B cell (primary cell): ENCODE measurements at regions of chr6 and their contacts with region 1.

Region 1: DNA sequence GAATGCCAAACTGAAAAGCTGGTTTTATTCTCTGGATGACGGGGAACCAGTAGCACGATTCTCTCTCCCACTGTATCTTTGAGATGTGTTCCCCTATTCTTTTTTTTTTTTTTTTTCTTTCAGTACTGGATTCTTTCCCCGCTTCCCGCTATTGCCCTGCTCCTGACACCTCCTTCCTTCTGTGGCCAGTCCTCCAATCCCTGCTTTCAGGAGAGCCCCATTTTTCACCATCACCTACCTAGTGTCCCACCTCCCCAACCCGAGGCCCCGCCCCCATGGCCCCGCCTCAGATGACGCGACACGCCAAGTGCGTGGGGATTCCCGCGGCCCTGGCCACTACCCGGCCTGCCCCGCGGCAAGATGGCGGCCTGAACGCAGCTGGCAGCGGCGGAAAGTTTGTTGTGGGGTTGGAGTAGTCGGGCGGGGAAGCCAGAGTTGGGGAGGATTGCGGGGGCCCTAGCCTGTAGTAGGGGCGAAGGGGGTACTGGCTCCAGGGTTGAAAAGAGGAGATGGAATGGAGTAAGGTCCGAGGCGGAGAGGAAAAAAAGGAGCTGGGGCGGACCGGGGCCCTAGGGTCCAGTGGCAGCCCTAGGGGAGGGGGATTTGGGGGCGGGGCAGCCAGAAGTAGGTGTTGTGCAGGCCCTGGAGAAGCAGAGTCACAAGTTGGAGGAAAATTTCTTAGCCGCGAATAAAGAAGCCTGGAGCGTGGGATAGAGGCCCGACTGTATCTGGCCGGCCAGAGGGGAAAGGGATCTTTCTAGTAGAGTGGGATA is at the start of gene TJAP1:
- DNase-seq: peak; percentile 94
- ATAC-seq: peak; percentile 100
- H3K4me3 ChIP-seq: peak within 1 kb of the TSS; percentile 51 to 81 (median 71)
- H3K4me3 Mint-ChIP-seq: peak within 1 kb of the TSS; percentile 96
- H3K27ac ChIP-seq: peak within 1 kb of the TSS; percentile 79 to 97
- H3K27ac Mint-ChIP-seq: peak within 1 kb of the TSS; percentile 98
- H3K4me1 ChIP-seq: peaks cover 14 to 22% of the 10 kb centered on the region in 2 donors
- H3K4me1 Mint-ChIP-seq: peaks cover 41% of the 10 kb centered on the region
- H3K27me3 ChIP-seq: no peaks in the 10 kb centered on the region
- H3K27me3 Mint-ChIP-seq: no peaks in the 10 kb centered on the region
- CTCF ChIP-seq: no peak
- total RNA-seq, gene TJAP1: 57.1 and 59.1 TPM in 2 replicates

Region 2: GRCh38 chr6:42710316-42710715 is 767.1 kb before region 1 on chr6:
- CTCF ChIA-PET with region 1: no interaction called
- POLR2A ChIA-PET with region 1: no interaction called
- intact Hi-C with region 1: no loop called
- DNase-seq: no peak
- ATAC-seq: no peak
- H3K4me3 ChIP-seq: no peak overlapping the region
- H3K4me3 Mint-ChIP-seq: no peak overlapping the region
- H3K27ac ChIP-seq: no peak overlapping the region
- H3K27ac Mint-ChIP-seq: no peak overlapping the region
- H3K4me1 ChIP-seq: no peaks in the 10 kb centered on the region
- H3K4me1 Mint-ChIP-seq: no peaks in the 10 kb centered on the region
- H3K27me3 ChIP-seq: peaks cover 0 to 3% (median 1%) of the 10 kb centered on the region in 4 experiments
- H3K27me3 Mint-ChIP-seq: peaks cover 11% of the 10 kb centered on the region
- CTCF ChIP-seq: no peak

Region 3: GRCh38 chr6:43181942-43182860 is 295.2 kb before region 1 on chr6 and contains the start of gene CUL9:
- CTCF ChIA-PET with region 1: no interaction called
- POLR2A ChIA-PET with region 1: no interaction called
- intact Hi-C with region 1: loop called (anchors 1 kb)
- DNase-seq: peak; percentile 90
- ATAC-seq: peak; percentile 99
- H3K4me3 ChIP-seq: peak within 1 kb of the TSS; percentile 60 to 90 (median 74)
- H3K4me3 Mint-ChIP-seq: peak within 1 kb of the TSS; percentile 92
- H3K27ac ChIP-seq: peak within 1 kb of the TSS; percentile 64 to 87
- H3K27ac Mint-ChIP-seq: peak within 1 kb of the TSS; percentile 91
- H3K4me1 ChIP-seq: peaks cover 20% of the 10 kb centered on the region in 2 donors
- H3K4me1 Mint-ChIP-seq: peaks cover 38% of the 10 kb centered on the region
- H3K27me3 ChIP-seq: no peaks in the 10 kb centered on the region
- H3K27me3 Mint-ChIP-seq: no peaks in the 10 kb centered on the region
- CTCF ChIP-seq: no peak
- total RNA-seq, gene CUL9: 110 and 115 TPM in 2 replicates

Region 4: DNA sequence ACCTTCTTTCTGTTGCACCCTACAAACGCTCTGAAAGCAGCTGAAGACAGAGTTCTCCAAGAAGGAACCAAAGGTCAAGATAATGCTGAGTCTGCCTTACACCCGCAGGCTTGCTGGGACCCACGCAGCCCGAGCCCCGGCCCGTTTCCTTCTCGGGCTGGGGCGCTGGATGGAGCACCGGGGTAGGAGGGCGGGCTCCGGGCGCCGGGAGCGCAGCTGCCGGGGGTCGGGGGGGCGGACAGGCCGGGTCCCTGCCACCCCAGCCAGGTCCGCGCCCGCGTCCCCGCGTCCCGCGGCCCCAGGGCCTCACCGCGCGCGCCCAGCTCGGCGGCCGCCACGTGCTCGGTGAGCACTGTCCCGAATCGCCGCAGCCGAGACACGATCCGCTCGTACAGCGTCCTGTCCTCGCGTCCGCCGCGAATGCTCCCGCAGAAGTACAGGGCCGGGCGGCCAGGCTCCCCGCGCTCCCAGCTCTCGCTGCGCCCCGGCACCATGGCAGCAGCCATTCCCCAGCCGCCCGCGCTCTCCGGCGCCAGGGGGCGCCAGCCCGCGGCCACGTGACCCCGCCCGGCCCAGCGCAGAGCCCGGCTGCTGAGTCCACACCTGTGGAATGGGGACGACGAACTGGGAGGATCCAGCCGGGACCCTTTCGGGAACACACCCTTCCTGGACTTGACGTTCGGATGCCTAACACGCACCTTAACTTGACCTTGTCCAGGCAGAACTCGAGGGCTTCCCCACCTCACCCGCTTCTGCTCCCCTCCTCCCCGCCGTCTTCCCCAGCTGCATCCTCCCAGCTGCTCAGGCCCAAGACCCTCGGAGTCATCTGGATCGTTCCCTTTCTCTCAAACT is 248.2 kb before region 1 on chr6 and contains the start of gene DNPH1:
- CTCF ChIA-PET with region 1: interaction called, 3 read pairs
- POLR2A ChIA-PET with region 1: interaction called, 6 read pairs
- intact Hi-C with region 1: loop called (anchors 1 kb)
- DNase-seq: peak; percentile 89
- ATAC-seq: peak; percentile 67
- H3K4me3 ChIP-seq: peak within 1 kb of the TSS; percentile 43 to 70 (median 61)
- H3K4me3 Mint-ChIP-seq: peak within 1 kb of the TSS; percentile 92
- H3K27ac ChIP-seq: peak within 1 kb of the TSS in 1 of 2 donors; percentile 73
- H3K27ac Mint-ChIP-seq: peak within 1 kb of the TSS; percentile 90
- H3K4me1 ChIP-seq: peaks cover 34 to 45% of the 10 kb centered on the region in 2 donors
- H3K4me1 Mint-ChIP-seq: peaks cover 29% of the 10 kb centered on the region
- H3K27me3 ChIP-seq: peaks cover 0 to 5% (median 0%) of the 10 kb centered on the region in 4 experiments
- H3K27me3 Mint-ChIP-seq: peaks cover 9% of the 10 kb centered on the region
- CTCF ChIP-seq: peak; percentile 95
- total RNA-seq, gene DNPH1: 25.8 and 29.0 TPM in 2 replicates

Region 5: GRCh38 chr6:43454696-43455530 is 22.5 kb before region 1 on chr6:
- CTCF ChIA-PET with region 1: interaction called, 4 read pairs
- POLR2A ChIA-PET with region 1: interaction called, 3 read pairs
- intact Hi-C with region 1: loop called (anchors 2 kb)
- DNase-seq: peak; percentile 73
- ATAC-seq: peak; percentile 53
- H3K4me3 ChIP-seq: peak overlapping the region; percentile 18 to 67 (median 61)
- H3K4me3 Mint-ChIP-seq: peak overlapping the region; percentile 89
- H3K27ac ChIP-seq: no peak overlapping the region
- H3K27ac Mint-ChIP-seq: peak overlapping the region; percentile 63
- H3K4me1 ChIP-seq: peaks cover 7 to 12% of the 10 kb centered on the region in 2 donors
- H3K4me1 Mint-ChIP-seq: peaks cover 14% of the 10 kb centered on the region
- H3K27me3 ChIP-seq: peaks cover 0 to 4% (median 2%) of the 10 kb centered on the region in 4 experiments
- H3K27me3 Mint-ChIP-seq: peaks cover 3% of the 10 kb centered on the region
- CTCF ChIP-seq: peak; percentile 90

Region 6: GRCh38 chr6:43516697-43517504 is 39.5 kb after region 1 on chr6 and contains the starts of genes POLR1C and YIPF3:
- CTCF ChIA-PET with region 1: no interaction called
- POLR2A ChIA-PET with region 1: no interaction called
- intact Hi-C with region 1: loop called (anchors 2 kb)
- DNase-seq: peak; percentile 97
- ATAC-seq: peak; percentile 96
- H3K4me3 ChIP-seq: peak within 1 kb of the TSS; percentile 78 to 98 (median 91)
- H3K4me3 Mint-ChIP-seq: no peak within 1 kb of the TSS
- H3K27ac ChIP-seq: peak within 1 kb of the TSS; percentile 65 to 91
- H3K27ac Mint-ChIP-seq: no peak within 1 kb of the TSS
- H3K4me1 ChIP-seq: peaks cover 28 to 36% of the 10 kb centered on the region in 2 donors
- H3K4me1 Mint-ChIP-seq: peaks cover 27% of the 10 kb centered on the region
- H3K27me3 ChIP-seq: no peaks in the 10 kb centered on the region
- H3K27me3 Mint-ChIP-seq: no peaks in the 10 kb centered on the region
- CTCF ChIP-seq: no peak
- total RNA-seq, gene POLR1C: 42.0 and 43.3 TPM in 2 replicates
- total RNA-seq, gene YIPF3: 82.1 and 92.6 TPM in 2 replicates

Region 7: DNA sequence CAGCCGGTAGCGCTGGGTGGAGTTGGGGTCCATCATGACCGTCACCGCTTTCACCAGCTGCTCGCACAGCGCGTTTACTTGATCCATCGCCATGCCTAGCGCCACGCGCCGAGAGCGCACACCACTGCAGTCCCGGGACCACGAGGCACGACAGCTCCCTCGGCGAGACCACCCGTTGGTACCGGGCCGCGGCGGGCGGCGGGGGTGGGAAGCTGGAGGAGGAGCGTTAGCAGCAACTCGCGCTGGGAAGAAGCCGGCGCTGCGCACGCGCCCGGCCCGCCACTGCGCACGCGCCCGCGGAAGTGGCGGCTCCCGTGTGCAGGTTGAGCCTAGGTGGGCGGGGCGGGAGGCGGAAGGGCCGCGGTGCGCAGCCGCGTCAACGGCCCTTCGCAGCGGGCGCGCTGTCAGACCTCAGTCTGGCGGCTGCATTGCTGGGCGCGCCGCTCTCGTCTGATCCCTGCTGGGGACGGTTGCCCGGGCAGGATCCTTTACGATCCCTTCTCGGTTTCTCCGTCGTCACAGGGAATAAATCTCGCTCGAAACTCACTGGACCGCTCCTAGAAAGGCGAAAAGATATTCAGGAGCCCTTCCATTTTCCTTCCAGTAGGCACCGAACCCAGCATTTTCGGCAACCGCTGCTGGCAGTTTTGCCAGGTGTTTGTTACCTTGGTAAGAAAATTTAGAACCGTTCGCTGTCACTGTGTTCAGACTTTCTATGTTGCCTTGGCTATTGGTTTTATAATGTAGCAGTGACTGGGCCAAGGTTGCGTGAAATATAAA is 98.5 kb after region 1 on chr6 and contains the starts of genes POLH and XPO5:
- CTCF ChIA-PET with region 1: no interaction called
- POLR2A ChIA-PET with region 1: no interaction called
- intact Hi-C with region 1: loop called (anchors 2 kb)
- DNase-seq: peak; percentile 95
- ATAC-seq: peak; percentile 94
- H3K4me3 ChIP-seq: peak within 1 kb of the TSS; percentile 81 to 99 (median 98)
- H3K4me3 Mint-ChIP-seq: peak within 1 kb of the TSS; percentile 94
- H3K27ac ChIP-seq: peak within 1 kb of the TSS; percentile 49 to 80
- H3K27ac Mint-ChIP-seq: peak within 1 kb of the TSS; percentile 91
- H3K4me1 ChIP-seq: peaks cover 28 to 40% of the 10 kb centered on the region in 2 donors
- H3K4me1 Mint-ChIP-seq: peaks cover 36% of the 10 kb centered on the region
- H3K27me3 ChIP-seq: no peaks in the 10 kb centered on the region
- H3K27me3 Mint-ChIP-seq: no peaks in the 10 kb centered on the region
- CTCF ChIP-seq: no peak
- total RNA-seq, gene POLH: 24.8 and 26.4 TPM in 2 replicates
- total RNA-seq, gene XPO5: 45.7 and 48.1 TPM in 2 replicates

Region 8: DNA sequence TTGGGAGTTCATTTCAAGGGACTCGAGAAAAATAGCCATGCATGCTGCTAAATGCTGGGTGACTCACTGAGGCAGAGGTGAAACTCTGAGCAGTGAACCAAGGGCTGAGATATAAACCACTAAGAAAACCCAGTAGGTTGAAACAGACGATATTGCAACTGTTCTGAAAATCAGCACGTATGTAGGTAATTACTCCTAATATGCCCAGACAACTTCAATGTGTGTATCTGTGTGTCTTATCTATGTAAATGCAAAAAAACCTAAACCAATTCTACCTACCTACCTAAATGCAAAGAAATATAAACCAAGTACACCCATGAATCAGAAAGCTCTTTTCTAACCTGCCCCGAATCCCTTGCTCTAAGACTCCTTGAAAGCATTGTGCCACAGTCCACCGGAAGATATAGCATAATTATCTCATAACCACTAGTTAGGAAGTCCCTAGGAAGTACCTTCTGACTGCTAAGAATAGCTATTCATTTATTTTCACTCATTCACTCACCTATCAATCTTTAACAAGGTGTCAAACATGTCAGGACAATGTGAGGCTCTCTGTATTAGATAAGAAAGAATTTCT is 1392.0 kb after region 1 on chr6:
- CTCF ChIA-PET with region 1: no interaction called
- POLR2A ChIA-PET with region 1: no interaction called
- intact Hi-C with region 1: no loop called
- DNase-seq: no peak
- ATAC-seq: no peak
- H3K4me3 ChIP-seq: no peak overlapping the region
- H3K4me3 Mint-ChIP-seq: no peak overlapping the region
- H3K27ac ChIP-seq: no peak overlapping the region
- H3K27ac Mint-ChIP-seq: no peak overlapping the region
- H3K4me1 ChIP-seq: peaks cover 4 to 12% of the 10 kb centered on the region in 2 donors
- H3K4me1 Mint-ChIP-seq: peaks cover 14% of the 10 kb centered on the region
- H3K27me3 ChIP-seq: no peaks in the 10 kb centered on the region
- H3K27me3 Mint-ChIP-seq: no peaks in the 10 kb centered on the region
- CTCF ChIP-seq: no peak